Activated CD4-positive, alpha-beta T cell treated with anti-CD3 and anti-CD28 coated beads for 36 hours (primary cell): ENCODE measurements at regions of chr19 and their contacts with region 1.

Region 1: DNA sequence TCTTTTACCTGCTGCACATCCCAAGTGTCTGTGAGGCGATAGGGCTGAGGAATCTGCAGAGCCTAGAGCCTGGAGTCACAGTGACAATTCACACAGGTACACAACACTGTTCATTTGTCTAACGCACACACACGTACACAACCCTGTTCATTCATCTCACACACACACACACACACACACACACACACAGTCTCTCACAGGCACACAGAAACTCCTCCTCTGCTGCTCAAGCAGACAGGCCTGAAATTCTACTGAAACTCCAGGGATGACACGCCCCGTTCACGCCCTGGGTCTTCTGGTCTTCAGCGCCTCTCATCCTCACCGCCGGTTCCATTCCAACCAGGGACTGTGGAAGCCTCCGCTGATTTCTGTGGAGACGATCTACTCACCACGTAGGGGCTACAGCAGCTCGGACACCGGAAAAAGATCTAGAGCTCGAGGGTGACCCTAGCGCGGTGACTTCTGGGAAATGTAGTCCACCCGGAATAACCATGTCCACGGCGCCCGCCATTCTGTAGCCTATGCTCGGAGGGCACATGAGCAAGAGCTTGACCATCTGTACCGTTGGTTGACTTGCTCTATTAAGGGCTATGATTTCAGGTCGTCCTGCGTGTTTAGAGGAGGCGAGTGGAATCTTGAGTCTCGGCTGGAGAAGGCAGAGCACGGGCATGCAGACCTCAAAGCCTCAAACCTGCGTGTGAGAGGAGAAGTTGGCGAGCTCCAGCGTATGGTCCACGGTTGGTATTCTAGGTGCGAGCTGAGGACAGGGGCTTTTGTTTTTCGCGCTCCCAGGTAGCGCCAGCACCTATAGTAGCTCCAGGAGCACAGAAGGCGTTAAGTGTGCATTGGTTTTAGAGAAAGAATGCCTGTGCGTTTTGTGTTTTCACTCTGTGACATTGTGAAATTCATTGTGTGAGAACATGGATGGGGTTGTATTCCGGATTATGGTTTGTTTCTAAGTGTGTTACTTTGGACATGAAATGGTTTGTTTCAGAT is 33.4 kb downstream of the ZNF45 start:
- DNase-seq: peak; percentile 82
- ATAC-seq: peak; percentile 96
- H3K4me3 Mint-ChIP-seq: peak overlapping the region; percentile 82
- H3K27ac Mint-ChIP-seq: peak overlapping the region; percentile 78
- H3K4me1 Mint-ChIP-seq: peaks cover 19% of the 10 kb centered on the region
- H3K27me3 Mint-ChIP-seq: no peaks in the 10 kb centered on the region

Region 2: DNA sequence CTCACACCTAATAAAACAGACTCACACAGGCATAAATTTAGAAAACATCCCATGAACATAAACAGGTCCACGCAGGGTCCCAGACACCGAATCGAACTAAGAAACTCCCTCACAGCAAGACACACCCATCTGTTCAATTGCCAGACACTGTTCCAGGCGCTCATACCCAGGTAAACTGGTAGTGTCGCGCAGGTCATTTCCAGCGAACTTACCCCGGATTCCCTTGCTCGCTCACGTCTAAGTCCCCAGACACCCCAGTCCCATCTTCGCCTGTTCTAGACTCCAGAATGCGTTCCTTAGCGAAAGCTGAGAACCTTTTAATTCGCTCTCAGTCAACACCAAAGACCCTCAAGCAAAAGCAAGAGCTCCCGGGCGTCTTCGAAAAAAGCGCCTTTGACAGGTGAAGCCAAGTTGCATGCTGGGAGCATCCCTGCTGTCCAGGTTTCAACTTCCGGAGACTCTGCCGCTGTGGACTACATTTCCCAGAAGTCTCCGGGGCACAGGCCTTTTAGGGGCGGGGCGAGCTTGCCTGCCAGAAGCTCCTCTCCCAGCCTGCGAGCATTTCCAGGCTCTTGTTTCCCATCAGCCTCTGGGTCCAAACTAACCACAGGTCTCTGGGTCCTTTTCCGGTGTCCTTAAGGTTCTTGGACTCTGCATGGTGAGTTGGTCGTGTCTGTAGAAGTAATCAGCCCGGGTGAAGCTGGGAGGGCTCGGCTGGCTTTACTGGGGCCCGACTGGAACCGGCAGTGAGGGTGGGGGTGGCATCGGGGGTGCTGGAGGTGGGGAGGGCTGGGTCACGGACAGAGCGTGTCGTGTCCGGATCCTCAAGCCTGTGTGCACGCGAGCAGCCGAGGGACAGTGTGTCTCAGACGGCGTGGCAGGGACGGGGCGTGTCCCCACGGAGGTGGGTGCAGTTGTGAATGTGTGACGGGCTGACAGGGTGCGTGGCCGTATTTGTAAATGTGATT is 74.6 kb before region 1 on chr19 and contains the start of gene ZNF283:
- CTCF ChIA-PET with region 1: interaction called, 5 read pairs
- POLR2A ChIA-PET with region 1: no interaction called
- intact Hi-C with region 1: loop called in 1 of 2 experiments (anchors 1 kb)
- DNase-seq: peak; percentile 92
- ATAC-seq: peak; percentile 99
- H3K4me3 Mint-ChIP-seq: peak within 1 kb of the TSS; percentile 87
- H3K27ac Mint-ChIP-seq: peak within 1 kb of the TSS; percentile 60
- H3K4me1 Mint-ChIP-seq: peaks cover 14% of the 10 kb centered on the region
- H3K27me3 Mint-ChIP-seq: peaks cover 5% of the 10 kb centered on the region
- total RNA-seq, gene ZNF283: 5.4 to 6.8 TPM

Region 3: DNA sequence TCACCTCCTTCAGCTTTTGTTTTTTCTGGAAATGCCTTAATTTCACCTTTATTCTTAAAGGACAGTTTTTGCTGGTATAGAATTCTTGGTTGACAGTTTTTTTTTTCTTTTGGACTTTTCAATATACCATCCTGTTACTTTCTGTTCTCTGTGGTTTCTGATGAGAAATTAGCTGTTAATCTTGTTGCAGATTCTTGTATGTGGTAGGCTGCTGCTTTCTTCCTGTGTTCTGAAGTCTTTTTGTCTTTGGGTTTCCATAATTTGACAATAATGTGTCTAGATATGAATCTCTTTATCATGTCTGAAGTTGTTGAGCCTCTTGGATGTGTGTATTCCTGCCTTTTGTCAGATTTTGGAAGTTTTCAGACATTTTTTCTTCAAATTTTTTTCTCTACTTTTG is 62.6 kb before region 1 on chr19:
- CTCF ChIA-PET with region 1: no interaction called
- POLR2A ChIA-PET with region 1: no interaction called
- intact Hi-C with region 1: no loop called
- DNase-seq: no peak
- ATAC-seq: no peak
- H3K4me3 Mint-ChIP-seq: no peak overlapping the region
- H3K27ac Mint-ChIP-seq: no peak overlapping the region
- H3K4me1 Mint-ChIP-seq: no peaks in the 10 kb centered on the region
- H3K27me3 Mint-ChIP-seq: no peaks in the 10 kb centered on the region

Region 4: DNA sequence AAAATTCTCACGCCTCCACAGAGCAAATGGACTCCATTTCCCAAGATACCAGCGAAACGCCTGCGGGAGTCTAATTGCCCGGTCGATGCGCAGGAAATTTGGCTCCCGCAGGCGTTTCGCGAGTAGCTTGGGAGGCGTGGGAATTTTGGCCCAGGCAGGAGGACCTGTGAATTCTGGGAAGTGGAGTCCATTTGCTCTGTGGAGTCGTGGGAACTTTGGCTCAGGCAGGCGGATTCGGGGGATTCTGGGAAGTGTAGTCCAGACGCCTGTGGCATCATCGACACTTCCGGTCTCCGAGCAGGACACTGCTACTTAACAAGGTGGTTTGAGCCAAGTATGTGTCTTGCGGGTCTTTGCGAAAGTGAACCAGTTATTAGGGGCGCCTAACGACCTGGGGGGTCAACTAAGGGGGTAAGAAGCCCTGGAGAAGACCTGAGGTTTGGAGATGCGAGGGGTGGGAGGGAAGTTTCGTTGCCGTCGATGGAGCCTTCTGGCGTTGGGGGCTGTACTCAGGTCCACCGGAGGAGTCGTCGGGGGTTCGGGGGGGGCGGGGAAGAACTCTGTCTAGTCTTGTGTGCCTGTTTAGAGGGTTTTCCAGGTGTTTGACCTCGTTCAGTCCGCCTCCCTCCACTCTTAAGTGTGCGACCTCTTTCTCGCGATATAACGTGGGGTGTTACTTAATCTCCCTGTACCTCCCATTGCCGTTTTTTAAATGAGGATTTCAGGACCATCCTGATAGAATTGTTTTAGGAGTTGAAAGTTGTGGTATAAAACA is 82.4 kb after region 1 on chr19 and contains the start of gene ZNF155:
- CTCF ChIA-PET with region 1: no interaction called
- POLR2A ChIA-PET with region 1: no interaction called
- intact Hi-C with region 1: loop called in 1 of 2 experiments (anchors 1 kb)
- DNase-seq: peak; percentile 82
- ATAC-seq: peak; percentile 97
- H3K4me3 Mint-ChIP-seq: peak within 1 kb of the TSS; percentile 90
- H3K27ac Mint-ChIP-seq: peak within 1 kb of the TSS; percentile 92
- H3K4me1 Mint-ChIP-seq: peaks cover 11% of the 10 kb centered on the region
- H3K27me3 Mint-ChIP-seq: no peaks in the 10 kb centered on the region
- total RNA-seq, gene ZNF155: 4.5 to 6.0 TPM